ENCODE measurements at regions of chr20 and their contacts with region 1.

Region 1: DNA sequence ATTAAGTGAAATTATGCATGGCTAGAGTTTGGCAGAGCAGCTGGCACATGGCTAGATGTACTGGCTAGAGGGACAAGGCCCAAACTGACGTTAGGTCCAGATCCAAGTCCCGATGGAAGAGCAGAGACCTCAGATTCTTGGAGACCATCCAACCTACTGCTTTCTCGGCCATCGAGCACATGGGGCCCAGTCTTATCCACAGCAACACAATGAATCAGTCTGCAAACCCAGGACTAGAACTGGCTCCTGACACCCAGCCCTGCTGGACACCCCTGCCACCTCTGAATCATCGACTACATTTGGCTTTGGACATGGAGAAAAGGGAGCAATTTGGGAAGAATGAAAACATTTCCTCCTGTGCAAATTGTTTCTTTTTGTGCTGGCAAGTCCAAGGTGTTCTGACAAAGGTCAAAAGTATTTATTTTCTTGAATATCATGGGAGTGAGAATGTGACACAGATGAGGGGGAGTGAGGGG is 23.9 kb upstream of the YWHAB start:
- DNase-seq: peak; percentile 78 to 96
- H3K4me3 ChIP-seq: no peak overlapping the region
- H3K27ac ChIP-seq: peak overlapping the region; percentile 91
- H3K4me1 ChIP-seq: peaks cover 19 to 49% of the 10 kb centered on the region in 2 donors
- H3K27me3 ChIP-seq: no peaks in the 10 kb centered on the region
- CTCF ChIP-seq: no peak

Region 2: DNA sequence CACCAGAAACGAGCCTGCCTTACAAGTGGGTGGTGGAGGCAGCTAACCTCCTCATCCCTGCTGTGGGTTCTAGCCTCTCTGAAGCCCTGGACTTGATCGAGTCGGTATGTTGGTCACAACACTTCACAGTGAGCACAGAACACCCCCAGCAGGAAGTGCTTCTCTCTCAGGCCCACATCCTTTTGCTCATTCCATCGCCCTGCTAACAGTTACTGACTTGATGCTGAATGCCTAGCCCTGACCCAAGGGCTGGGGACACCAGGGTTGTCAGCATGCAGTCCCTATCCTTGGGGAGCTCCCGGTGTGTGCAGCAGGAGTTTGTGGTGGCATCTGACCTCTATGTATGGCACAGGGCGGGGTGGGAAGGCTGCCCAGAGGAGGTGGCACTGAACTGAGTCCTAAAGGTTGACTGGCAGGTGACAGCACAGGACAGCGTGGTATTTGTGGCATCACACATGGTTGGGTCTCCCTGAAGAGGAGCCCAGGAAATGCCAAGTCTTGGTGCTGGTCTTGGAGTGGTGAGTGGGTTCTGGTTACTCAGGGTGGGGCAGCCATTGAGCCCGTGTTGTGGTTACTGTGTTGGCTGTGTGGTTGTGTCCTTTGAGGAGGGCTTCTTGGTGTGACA is 1161.5 kb before region 1 on chr20:
- intact Hi-C with region 1: no loop called
- DNase-seq: no peak
- H3K4me3 ChIP-seq: no peak overlapping the region
- H3K27ac ChIP-seq: no peak overlapping the region
- H3K4me1 ChIP-seq: no peaks in the 10 kb centered on the region
- H3K27me3 ChIP-seq: no peaks in the 10 kb centered on the region
- CTCF ChIP-seq: no peak

Region 3: GRCh38 chr20:44475694-44476560 is 385.6 kb before region 1 on chr20 and contains the start of gene TTPAL:
- intact Hi-C with region 1: loop called (anchors 10 kb)
- DNase-seq: peak; percentile 50 to 94
- H3K4me3 ChIP-seq: peak within 1 kb of the TSS; percentile 74 to 84
- H3K27ac ChIP-seq: peak within 1 kb of the TSS; percentile 94 to 97
- H3K4me1 ChIP-seq: peaks cover 5 to 6% of the 10 kb centered on the region in 2 donors
- H3K27me3 ChIP-seq: no peaks in the 10 kb centered on the region
- CTCF ChIP-seq: peak in 2 of 3 experiments; percentile 25 to 60
- total RNA-seq, gene TTPAL: 44.9 TPM

Region 4: DNA sequence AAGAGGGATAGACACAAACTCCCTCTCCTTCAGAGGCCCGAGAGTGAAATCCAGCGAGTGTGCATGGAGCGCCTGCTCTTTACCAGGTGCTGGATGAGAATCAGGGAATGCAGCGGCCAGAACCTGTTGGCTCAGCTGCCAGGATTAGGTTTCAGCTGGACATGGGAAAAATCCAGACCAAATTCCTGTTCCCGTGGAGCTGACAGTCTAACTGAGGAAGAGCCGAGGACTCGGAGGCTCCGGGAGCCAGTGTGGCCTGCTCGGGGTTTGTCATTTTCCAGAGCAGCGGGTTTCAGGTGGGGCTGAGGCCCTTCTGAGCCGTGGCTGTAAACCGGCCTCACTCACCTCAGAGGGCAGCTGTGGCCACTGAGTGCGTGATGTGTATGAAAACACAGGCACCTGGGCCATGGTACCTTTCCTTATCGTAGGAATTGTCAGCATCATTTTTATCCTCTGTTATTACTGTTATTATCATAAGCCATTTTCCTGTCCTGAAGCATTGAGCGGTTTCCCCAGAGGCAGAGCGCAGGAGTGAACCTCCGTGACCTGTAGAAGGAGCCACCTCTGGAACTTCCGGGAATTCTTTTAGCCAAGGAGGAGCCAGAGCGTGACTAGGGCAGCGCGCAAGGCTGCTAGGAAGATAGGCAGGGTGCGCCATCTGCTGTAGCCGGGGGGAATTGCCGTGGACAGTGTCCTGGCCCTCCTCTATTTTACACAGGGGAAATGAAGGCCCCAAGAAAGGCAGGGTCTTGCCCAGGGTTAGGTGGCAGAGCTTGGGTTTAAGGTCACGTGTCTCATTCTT is 251.9 kb before region 1 on chr20:
- intact Hi-C with region 1: loop called (anchors 10 kb)
- DNase-seq: peak in 1 of 2 donors; percentile 95
- H3K4me3 ChIP-seq: peak overlapping the region; percentile 15 to 51
- H3K27ac ChIP-seq: peak overlapping the region; percentile 83 to 88
- H3K4me1 ChIP-seq: peaks cover 5 to 20% of the 10 kb centered on the region in 2 donors
- H3K27me3 ChIP-seq: no peaks in the 10 kb centered on the region
- CTCF ChIP-seq: peak; percentile 98

Region 5: GRCh38 chr20:44683263-44684046 is 178.1 kb before region 1 on chr20:
- intact Hi-C with region 1: loop called (anchors 1 kb)
- DNase-seq: no peak
- H3K4me3 ChIP-seq: no peak overlapping the region
- H3K27ac ChIP-seq: no peak overlapping the region
- H3K4me1 ChIP-seq: peaks cover 0 to 5% of the 10 kb centered on the region in 2 donors
- H3K27me3 ChIP-seq: no peaks in the 10 kb centered on the region
- CTCF ChIP-seq: peak in 2 of 3 experiments; percentile 34 to 46

Region 6: GRCh38 chr20:44733341-44734069 is 128.1 kb before region 1 on chr20:
- intact Hi-C with region 1: loop called (anchors 5 kb)
- DNase-seq: peak in 1 of 2 donors; percentile 90
- H3K4me3 ChIP-seq: no peak overlapping the region
- H3K27ac ChIP-seq: peak overlapping the region; percentile 80 to 93
- H3K4me1 ChIP-seq: peaks cover 11 to 54% of the 10 kb centered on the region in 2 donors
- H3K27me3 ChIP-seq: no peaks in the 10 kb centered on the region
- CTCF ChIP-seq: peak; percentile 94 to 96 (median 95)

Region 7: DNA sequence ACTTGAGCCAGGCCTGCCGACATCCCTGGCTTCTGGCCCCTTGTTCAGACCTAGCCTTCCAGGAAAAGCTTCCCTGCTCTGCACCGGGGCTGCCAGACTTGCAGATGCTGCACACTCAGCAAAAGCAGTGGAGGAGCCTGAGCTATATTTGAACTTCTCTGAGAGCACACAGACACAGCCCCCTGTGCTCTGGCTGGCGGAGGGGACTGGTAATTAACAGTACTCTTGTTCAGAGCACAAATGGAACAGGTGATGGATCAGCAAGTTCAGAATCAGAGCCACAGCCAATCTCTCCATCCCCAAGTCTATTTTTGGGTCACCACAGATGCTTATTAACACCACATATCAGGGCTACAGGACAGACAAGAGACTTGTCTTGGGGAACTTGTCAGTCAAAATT is 23.6 kb before region 1 on chr20:
- intact Hi-C with region 1: no loop called
- DNase-seq: no peak
- H3K4me3 ChIP-seq: no peak overlapping the region
- H3K27ac ChIP-seq: no peak overlapping the region
- H3K4me1 ChIP-seq: no peaks in the 10 kb centered on the region
- H3K27me3 ChIP-seq: no peaks in the 10 kb centered on the region
- CTCF ChIP-seq: no peak

Region 8: DNA sequence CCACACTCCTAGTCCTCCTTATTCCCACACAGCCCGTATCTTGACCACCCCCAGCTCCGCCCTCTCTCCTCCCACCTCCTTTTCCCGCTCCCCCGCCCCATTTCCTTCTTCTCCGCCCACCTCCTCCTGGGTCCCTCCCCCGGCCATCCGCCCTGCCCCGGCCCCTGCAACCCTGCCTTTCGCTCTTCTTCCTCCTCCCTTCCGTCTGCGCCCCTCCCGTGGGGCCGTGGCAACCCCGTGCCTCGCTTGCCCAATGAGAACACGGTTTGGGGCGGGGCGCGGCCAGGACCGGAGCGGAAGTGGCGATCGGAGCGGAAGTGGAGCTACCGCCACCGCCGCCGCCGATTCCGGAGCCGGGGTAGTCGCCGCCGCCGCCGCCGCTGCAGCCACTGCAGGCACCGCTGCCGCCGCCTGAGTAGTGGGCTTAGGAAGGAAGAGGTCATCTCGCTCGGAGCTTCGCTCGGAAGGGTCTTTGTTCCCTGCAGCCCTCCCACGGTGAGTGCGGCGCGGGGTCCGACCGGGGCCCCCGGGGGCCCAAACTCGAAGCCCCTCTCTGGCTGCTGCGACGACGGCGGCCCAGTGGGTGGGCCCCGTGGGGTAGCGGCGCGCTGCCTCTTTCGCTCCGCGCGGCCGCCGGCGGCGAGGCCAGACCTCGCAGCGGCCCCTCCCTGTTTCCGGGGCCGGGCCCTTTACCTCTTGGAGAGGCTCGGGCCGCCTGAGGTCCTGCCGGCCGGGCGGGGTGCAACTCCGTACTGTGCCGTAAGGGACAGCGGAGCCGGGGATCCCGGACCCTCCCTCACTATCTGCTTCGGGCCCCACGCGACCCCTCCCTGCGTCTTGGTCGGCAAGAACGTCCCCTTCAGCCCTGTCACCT is 24.1 kb after region 1 on chr20 and contains the start of gene YWHAB:
- intact Hi-C with region 1: loop called (anchors 2 kb)
- DNase-seq: peak; percentile 96 to 99
- H3K4me3 ChIP-seq: peak within 1 kb of the TSS; percentile 78 to 91
- H3K27ac ChIP-seq: peak within 1 kb of the TSS; percentile 96 to 97
- H3K4me1 ChIP-seq: peaks cover 0 to 28% of the 10 kb centered on the region in 2 donors
- H3K27me3 ChIP-seq: no peaks in the 10 kb centered on the region
- CTCF ChIP-seq: no peak
- total RNA-seq, gene YWHAB: 50.4 TPM

Region 9: GRCh38 chr20:45011108-45011526 is 149.5 kb after region 1 on chr20:
- intact Hi-C with region 1: no loop called
- DNase-seq: peak in 1 of 2 donors; percentile 71
- H3K4me3 ChIP-seq: no peak overlapping the region
- H3K27ac ChIP-seq: no peak overlapping the region
- H3K4me1 ChIP-seq: no peaks in the 10 kb centered on the region
- H3K27me3 ChIP-seq: no peaks in the 10 kb centered on the region
- CTCF ChIP-seq: peak; percentile 27 to 69 (median 32)